PC-9 (cell line): ENCODE measurements at regions of chr16 and their contacts with region 1.

Region 1: DNA sequence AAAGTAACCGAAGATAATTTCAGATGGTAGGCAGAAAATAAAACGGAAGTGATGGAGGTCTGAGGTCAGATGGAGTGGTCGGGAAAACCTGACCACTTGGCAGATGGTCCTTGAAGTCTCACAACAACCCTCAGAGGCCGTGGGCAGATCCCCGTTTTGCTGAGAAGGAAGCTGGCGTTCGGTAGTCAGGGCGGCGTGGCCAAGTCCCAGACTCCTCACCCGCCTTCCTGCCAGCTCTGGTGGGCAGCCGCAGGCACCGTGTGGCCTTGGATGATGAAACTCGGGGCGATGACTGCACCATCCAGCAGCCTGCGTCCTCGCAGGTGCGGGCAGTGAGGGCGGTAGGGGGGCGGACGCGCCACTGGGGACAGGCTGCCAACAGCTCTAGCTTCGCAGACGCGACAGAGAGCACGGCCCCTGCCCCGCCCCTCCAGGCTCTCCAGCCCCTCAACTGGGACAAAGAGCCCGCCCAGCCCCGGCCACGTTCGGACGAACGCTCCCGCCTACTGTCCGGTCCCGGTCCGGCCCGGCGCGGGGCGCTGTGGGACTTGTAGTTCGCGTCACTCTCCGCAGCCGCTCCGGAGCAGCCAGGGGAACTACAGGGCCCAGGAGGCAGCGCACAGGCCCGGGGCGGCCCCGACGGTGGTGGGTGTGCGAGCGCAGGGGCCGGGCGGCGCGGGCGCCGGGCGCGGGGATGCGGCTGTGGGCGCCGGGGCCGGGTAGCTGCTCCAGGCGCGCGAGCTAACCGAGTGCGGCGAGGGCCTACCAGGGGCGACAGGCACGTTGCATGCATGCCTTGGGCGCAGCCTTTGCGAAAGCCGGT is at the start of gene GPT2:
- DNase-seq: peak; percentile 91 to 99
- H3K4me3 ChIP-seq: peak within 1 kb of the TSS; percentile 82
- H3K27ac ChIP-seq: peak within 1 kb of the TSS; percentile 96
- H3K4me1 ChIP-seq: peaks cover 27% of the 10 kb centered on the region
- H3K27me3 ChIP-seq: no peaks in the 10 kb centered on the region
- CTCF ChIP-seq: no peak; the same call in 1 of the 2 replicates
- total RNA-seq, gene GPT2: 52.8 and 67.2 TPM in 2 replicates

Region 2: GRCh38 chr16:46859719-46860152 is 24.2 kb before region 1 on chr16:
- CTCF ChIA-PET with region 1: interaction called, 3 read pairs
- POLR2A ChIA-PET with region 1: interaction called, 5 read pairs
- intact Hi-C with region 1: loop called (anchors 2 kb)
- DNase-seq: peak; percentile 71 to 84
- H3K4me3 ChIP-seq: no peak overlapping the region
- H3K27ac ChIP-seq: peak overlapping the region; percentile 63
- H3K4me1 ChIP-seq: peaks cover 13% of the 10 kb centered on the region
- H3K27me3 ChIP-seq: no peaks in the 10 kb centered on the region
- CTCF ChIP-seq: no peak

Region 3: GRCh38 chr16:46973207-46973995 is 89.5 kb after region 1 on chr16 and contains the start of gene DNAJA2:
- CTCF ChIA-PET with region 1: no interaction called
- POLR2A ChIA-PET with region 1: interaction called, 16 read pairs
- intact Hi-C with region 1: no loop called
- DNase-seq: peak; percentile 66 to 90
- H3K4me3 ChIP-seq: peak within 1 kb of the TSS; percentile 91
- H3K27ac ChIP-seq: peak within 1 kb of the TSS; percentile 85
- H3K4me1 ChIP-seq: peaks cover 41% of the 10 kb centered on the region
- H3K27me3 ChIP-seq: no peaks in the 10 kb centered on the region
- CTCF ChIP-seq: no peak
- total RNA-seq, gene DNAJA2: 78.9 and 89.8 TPM in 2 replicates